Esophagus muscularis mucosa (tissue), 4 donors: ENCODE measurements at regions of chrX and their contacts with region 1.

Region 1: GRCh38 chrX:18210470-18210869 is 10.2 kb downstream of the BEND2 start:
- DNase-seq: no peak
- H3K4me3 ChIP-seq: no peak overlapping the region
- H3K27ac ChIP-seq: no peak overlapping the region
- H3K4me1 ChIP-seq: no peaks in the 10 kb centered on the region
- H3K27me3 ChIP-seq: no peaks in the 10 kb centered on the region
- CTCF ChIP-seq: peak in 1 of 3 experiments; percentile 28
- EP300 ChIP-seq: no peak
- POLR2A ChIP-seq: no peak

Region 2: GRCh38 chrX:17792826-17793225 is 417.6 kb before region 1 on chrX:
- intact Hi-C with region 1: loop called (anchors 10 kb)
- DNase-seq: no peak
- H3K4me3 ChIP-seq: no peak overlapping the region
- H3K27ac ChIP-seq: no peak overlapping the region
- H3K4me1 ChIP-seq: peaks cover 0 to 7% (median 3%) of the 10 kb centered on the region in 4 donors
- H3K27me3 ChIP-seq: no peaks in the 10 kb centered on the region
- CTCF ChIP-seq: no peak
- EP300 ChIP-seq: no peak
- POLR2A ChIP-seq: no peak

Region 3: DNA sequence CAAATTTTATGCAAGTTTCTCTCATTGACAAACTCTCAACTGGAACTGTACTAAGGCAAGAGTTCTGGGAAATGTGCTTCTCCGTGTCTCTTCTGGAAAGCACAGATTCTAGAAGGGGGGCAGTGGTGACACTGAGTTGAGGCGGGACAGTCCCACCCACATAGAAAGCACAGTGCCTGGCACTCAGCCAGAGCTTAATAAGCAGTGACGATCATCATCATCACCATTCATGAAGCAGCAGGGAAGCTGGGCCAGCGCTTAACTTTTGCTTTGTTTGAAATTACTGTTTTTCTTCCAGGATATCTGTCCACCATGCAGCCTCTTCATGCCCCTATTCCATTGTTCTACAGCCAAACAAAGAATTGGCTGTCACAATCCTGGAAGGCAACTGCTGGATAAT is 50.1 kb before region 1 on chrX:
- intact Hi-C with region 1: no loop called
- DNase-seq: no peak
- H3K4me3 ChIP-seq: no peak overlapping the region
- H3K27ac ChIP-seq: no peak overlapping the region
- H3K4me1 ChIP-seq: no peaks in the 10 kb centered on the region
- H3K27me3 ChIP-seq: no peaks in the 10 kb centered on the region
- CTCF ChIP-seq: no peak
- EP300 ChIP-seq: no peak
- POLR2A ChIP-seq: no peak